ENCODE measurements at regions of chrX and their contacts with region 1.

Region 1: DNA sequence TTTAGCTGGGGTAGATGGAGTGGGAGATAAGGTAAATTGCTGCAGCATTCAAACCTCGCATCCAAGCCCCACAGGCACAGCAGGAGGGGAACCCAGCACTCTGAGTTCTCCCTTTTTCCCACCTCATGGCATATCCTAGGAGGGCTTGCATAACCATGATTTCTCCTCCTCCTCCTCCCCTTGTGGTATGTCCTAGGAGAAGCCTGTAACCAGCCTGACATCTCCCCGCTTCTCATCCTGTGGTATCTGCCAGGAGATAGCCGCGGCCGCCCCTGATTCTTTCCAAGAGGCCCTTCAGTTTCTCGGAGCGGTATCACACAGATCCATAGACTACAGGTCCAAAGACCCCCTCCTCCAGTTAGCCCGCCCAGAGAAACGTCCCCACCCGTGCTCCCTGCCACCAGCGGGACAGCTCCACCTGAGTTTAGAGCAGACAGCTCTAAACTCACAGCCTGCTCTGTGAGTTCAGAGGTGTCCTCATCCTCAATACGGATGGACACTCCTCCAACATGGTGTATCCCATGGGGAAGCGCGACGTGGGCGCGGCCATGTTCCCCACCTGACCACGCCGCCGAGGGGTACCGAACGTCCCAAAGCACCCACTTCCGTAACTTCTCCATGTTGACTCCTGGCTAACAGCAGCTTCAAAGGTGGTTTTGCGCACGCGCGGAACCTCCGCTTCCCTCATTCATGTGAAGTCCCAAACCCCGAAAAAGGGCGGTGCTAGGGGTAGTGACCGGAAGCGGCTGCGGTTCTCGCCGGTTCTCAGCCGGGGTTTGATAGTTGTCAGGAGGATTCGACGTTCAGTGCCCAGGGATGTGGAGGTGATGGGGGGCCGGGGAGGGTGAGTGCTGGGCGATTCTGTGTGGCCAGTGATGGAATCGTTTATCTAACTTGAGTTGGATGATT is at the start of gene ZNF81:
- DNase-seq: peak; percentile 93
- ATAC-seq: peak; percentile 97
- H3K4me3 ChIP-seq: peak within 1 kb of the TSS; percentile 66 to 76 (median 70)
- H3K4me3 Mint-ChIP-seq: peak within 1 kb of the TSS; percentile 99
- H3K27ac ChIP-seq: peak within 1 kb of the TSS; percentile 64 to 73
- H3K27ac Mint-ChIP-seq: peak within 1 kb of the TSS; percentile 98
- H3K4me1 ChIP-seq: peaks cover 9% of the 10 kb centered on the region in 2 donors
- H3K4me1 Mint-ChIP-seq: peaks cover 24% of the 10 kb centered on the region
- H3K27me3 ChIP-seq: no peaks in the 10 kb centered on the region
- H3K27me3 Mint-ChIP-seq: no peaks in the 10 kb centered on the region
- CTCF ChIP-seq: no peak
- total RNA-seq, gene ZNF81: 15.3 and 17.7 TPM in 2 replicates

Region 2: GRCh38 chrX:47169726-47170515 is 666.5 kb before region 1 on chrX:
- CTCF ChIA-PET with region 1: no interaction called
- POLR2A ChIA-PET with region 1: no interaction called
- intact Hi-C with region 1: no loop called
- DNase-seq: no peak
- ATAC-seq: no peak
- H3K4me3 ChIP-seq: no peak overlapping the region
- H3K4me3 Mint-ChIP-seq: no peak overlapping the region
- H3K27ac ChIP-seq: no peak overlapping the region
- H3K27ac Mint-ChIP-seq: no peak overlapping the region
- H3K4me1 ChIP-seq: no peaks in the 10 kb centered on the region
- H3K4me1 Mint-ChIP-seq: peaks cover 1% of the 10 kb centered on the region
- H3K27me3 ChIP-seq: no peaks in the 10 kb centered on the region
- H3K27me3 Mint-ChIP-seq: no peaks in the 10 kb centered on the region
- CTCF ChIP-seq: no peak

Region 3: GRCh38 chrX:47776292-47777006 is 60.0 kb before region 1 on chrX:
- CTCF ChIA-PET with region 1: no interaction called
- POLR2A ChIA-PET with region 1: no interaction called
- intact Hi-C with region 1: no loop called
- DNase-seq: no peak
- ATAC-seq: no peak
- H3K4me3 ChIP-seq: no peak overlapping the region
- H3K4me3 Mint-ChIP-seq: no peak overlapping the region
- H3K27ac ChIP-seq: no peak overlapping the region
- H3K27ac Mint-ChIP-seq: no peak overlapping the region
- H3K4me1 ChIP-seq: no peaks in the 10 kb centered on the region
- H3K4me1 Mint-ChIP-seq: no peaks in the 10 kb centered on the region
- H3K27me3 ChIP-seq: no peaks in the 10 kb centered on the region
- H3K27me3 Mint-ChIP-seq: peaks cover 15% of the 10 kb centered on the region
- CTCF ChIP-seq: no peak

Region 4: GRCh38 chrX:48493890-48494364 is 657.5 kb after region 1 on chrX:
- CTCF ChIA-PET with region 1: interaction called, 17 read pairs
- POLR2A ChIA-PET with region 1: no interaction called
- intact Hi-C with region 1: no loop called
- DNase-seq: no peak
- ATAC-seq: no peak
- H3K4me3 ChIP-seq: no peak overlapping the region
- H3K4me3 Mint-ChIP-seq: no peak overlapping the region
- H3K27ac ChIP-seq: no peak overlapping the region
- H3K27ac Mint-ChIP-seq: no peak overlapping the region
- H3K4me1 ChIP-seq: no peaks in the 10 kb centered on the region
- H3K4me1 Mint-ChIP-seq: no peaks in the 10 kb centered on the region
- H3K27me3 ChIP-seq: peaks cover 0 to 2% (median 0%) of the 10 kb centered on the region in 4 experiments
- H3K27me3 Mint-ChIP-seq: peaks cover 4% of the 10 kb centered on the region
- CTCF ChIP-seq: no peak

Measured in B cell (primary cell).